ENCODE measurements at regions of chr17 and their contacts with region 1.

Region 1: DNA sequence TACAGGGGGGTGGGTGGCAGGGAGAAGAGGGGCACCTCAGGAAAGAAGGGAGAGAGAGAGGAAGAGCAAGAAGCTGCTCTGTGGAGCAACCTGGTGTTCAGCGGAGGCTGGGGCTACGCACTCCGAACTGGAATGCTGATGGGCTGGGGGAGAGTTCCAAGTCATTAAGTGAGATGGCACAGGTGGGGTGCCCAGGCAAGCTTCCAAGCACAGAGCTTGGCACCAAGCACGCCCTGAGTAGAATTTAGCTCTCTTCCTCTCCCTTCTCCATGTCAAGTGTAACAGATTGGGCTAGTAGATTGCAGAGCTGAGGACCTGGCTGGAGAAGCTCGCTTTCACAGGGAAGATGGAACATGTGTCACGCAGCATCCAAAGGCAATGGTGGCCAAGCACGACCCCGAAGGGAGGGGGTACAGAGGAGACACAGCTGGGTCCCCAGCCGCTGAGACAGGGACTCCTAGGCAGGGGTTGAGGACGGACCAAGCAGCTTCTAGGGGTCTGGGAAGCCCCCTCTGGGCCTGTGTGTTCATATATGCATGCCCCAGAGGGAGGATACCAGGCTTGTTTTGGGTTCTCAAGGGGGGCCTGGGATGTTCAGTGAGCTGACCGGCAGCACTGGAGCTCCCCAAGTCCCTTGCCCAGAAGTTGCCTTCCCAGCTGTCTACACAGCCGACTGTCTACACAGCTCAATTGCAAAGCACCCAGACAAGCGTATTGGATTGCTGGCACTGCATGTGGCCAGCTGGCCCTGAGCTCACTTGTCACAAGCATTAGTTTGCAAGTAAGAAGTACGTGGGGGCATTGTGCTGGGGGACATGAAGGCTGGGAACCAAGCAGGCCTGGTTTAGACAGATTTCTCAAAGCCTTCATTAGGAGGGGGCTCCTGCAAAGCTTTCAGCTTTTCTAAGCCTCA is 247.8 kb downstream of the ENGASE start:
- DNase-seq: no peak
- ATAC-seq: no peak
- H3K4me3 ChIP-seq: no peak overlapping the region
- H3K27ac ChIP-seq: no peak overlapping the region
- H3K4me1 ChIP-seq: no peaks in the 10 kb centered on the region
- CTCF ChIP-seq: no peak
- EP300 ChIP-seq: no peak
- POLR2A ChIP-seq: no peak
- RAD21 ChIP-seq: no peak

Region 2: DNA sequence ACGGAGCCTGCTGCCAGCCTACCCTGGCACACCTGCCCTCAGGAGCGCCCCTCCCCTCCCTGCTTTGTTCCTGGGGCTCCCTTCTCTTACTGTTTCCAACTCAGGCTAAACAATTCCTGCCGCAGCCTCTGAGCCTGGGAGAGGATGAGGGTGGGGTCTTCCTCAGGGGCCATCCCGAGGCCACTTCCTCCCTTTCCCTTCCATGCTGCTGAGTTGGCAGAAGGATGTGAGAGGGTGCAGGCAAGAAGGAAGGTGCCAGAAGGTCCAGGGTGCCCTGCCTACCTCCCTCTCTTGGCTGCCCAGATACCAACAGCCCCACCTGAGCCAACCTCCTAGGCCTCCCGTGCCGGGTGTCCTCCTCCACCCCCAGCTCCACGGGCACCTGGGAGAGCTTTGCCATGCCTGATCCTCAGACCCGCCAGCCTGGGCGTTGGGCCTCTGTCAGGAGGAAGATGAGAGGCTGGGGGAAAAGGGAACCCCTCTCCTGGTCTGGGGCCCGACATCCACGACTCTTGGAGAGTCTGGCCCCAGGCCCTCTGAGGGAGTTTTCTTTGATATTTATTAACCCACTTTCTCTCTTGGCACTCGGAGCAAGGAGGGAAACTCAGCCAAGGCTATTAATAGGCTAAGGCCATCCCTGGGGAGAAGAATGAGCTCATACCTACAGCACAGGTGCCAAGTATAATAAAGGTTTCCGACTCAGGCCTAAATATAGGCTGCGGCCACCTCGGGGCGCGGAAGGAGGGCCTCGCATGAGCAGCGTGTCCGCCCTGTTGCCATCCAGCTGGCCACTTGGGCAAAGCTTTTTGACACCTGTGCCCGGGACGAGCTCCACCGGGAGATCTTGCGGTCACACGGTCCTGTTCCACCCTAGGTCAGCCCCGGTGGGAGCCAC is 15.8 kb before region 1 on chr17:
- CTCF ChIA-PET with region 1: interaction called, 10 read pairs
- POLR2A ChIA-PET with region 1: no interaction called
- DNase-seq: no peak
- ATAC-seq: no peak
- H3K4me3 ChIP-seq: no peak overlapping the region
- H3K27ac ChIP-seq: no peak overlapping the region
- H3K4me1 ChIP-seq: no peaks in the 10 kb centered on the region
- CTCF ChIP-seq: no peak
- EP300 ChIP-seq: no peak
- POLR2A ChIP-seq: no peak
- RAD21 ChIP-seq: no peak

Region 3: DNA sequence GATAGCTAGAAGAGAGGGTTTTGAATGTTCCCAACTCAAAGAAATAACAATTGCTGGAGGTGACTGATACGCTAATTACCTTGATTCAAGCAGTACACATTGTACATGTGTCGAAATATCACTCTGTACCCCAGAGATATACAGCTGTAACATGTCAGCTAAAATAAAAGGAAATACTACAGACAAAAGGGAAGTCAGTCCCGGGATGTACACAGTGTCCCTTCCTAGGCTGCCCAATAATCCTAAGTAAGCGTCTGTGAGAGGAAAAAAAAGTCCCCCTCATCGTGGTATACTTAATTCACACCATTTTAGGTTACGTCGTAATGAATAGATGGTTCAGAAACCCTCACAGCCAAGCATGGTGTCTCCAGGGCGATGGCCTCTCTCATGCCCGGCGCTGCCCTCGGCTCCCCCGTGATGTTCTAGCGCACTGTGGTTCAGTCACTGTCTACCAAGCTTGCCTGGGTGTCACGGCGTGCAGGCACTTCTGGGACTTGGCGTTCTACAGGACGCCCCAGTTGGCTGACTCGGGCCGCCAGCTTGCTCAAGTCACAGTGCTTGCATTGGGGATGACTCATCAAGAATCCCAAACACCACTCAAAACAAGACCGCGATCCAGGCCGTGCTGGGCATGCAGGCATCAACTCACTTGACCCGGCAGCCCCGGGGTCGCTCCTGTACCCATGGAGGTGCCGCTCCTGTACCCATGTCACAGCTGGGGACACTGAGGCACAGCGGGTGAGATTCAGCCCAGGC is 741.5 kb after region 1 on chr17:
- CTCF ChIA-PET with region 1: no interaction called
- POLR2A ChIA-PET with region 1: no interaction called
- DNase-seq: peak; percentile 83 to 93
- ATAC-seq: peak; percentile 88 to 92
- H3K4me3 ChIP-seq: no peak overlapping the region
- H3K27ac ChIP-seq: peak overlapping the region; percentile 70 to 88
- H3K4me1 ChIP-seq: peaks cover 17% of the 10 kb centered on the region
- CTCF ChIP-seq: no peak
- EP300 ChIP-seq: no peak
- POLR2A ChIP-seq: no peak
- RAD21 ChIP-seq: no peak

Measured in A549 (cell line).